Activated T-helper 1 cell treated with anti-CD3 and anti-CD28 coated beads, Interleukin-12 subunit alpha, Interleukin-12 subunit beta, Interleukin-2, Interleukin-4 antibody, amounts not matched to agents 30 ng/mL and 10 ng/mL and 1 ng/mL, durations not matched to agents 14 hours and 24 hours and 36 hours (primary cell): ENCODE measurements at regions of chr4 and their contacts with region 1.

Region 1: DNA sequence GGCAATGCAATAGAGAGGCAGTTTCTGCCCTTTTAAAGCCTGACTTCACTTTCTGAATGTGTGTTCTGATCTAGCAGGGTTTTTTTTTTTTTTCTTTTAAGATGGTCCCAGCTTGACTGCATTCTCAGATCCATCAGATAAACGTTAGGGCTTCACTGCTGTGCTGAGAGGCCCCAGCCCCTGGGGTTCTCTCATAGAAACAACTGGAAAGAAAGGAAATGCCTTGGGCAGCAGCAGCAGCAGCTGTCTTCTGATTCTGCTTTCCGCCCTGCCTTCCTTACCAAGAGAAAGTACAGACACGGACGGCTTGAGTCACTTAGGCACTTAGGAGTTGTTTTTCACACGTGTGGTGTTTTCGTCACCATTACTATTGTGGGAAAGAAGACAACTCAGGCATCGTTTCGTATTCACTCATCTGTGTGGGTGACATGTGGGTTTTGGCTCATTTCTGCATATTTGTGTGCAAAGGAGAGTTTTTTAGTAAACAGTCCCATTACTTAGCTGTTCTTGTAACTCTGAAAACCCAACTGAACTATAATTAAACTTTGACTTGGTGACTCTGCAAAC is 172.0 kb downstream of the PTTG2 start:
- DNase-seq: peak; percentile 80
- H3K4me3 Mint-ChIP-seq: peak overlapping the region; percentile 64
- H3K27ac Mint-ChIP-seq: peak overlapping the region; percentile 94
- H3K4me1 Mint-ChIP-seq: peaks cover 84% of the 10 kb centered on the region
- H3K27me3 Mint-ChIP-seq: peaks cover 3% of the 10 kb centered on the region

Region 2: GRCh38 chr4:37686373-37687193 is 445.6 kb before region 1 on chr4 and contains the start of gene RELL1:
- intact Hi-C with region 1: loop called (anchors 1 kb)
- DNase-seq: peak; percentile 99
- H3K4me3 Mint-ChIP-seq: peak within 1 kb of the TSS; percentile 96
- H3K27ac Mint-ChIP-seq: peak within 1 kb of the TSS; percentile 98
- H3K4me1 Mint-ChIP-seq: peaks cover 40% of the 10 kb centered on the region
- H3K27me3 Mint-ChIP-seq: peaks cover 7% of the 10 kb centered on the region
- total RNA-seq, gene RELL1: 21.0 and 21.4 TPM in 2 replicates

Region 3: GRCh38 chr4:38078590-38079421 is 53.4 kb before region 1 on chr4:
- intact Hi-C with region 1: loop called (anchors 5 kb)
- DNase-seq: no peak
- H3K4me3 Mint-ChIP-seq: no peak overlapping the region
- H3K27ac Mint-ChIP-seq: peak overlapping the region; percentile 77
- H3K4me1 Mint-ChIP-seq: peaks cover 30% of the 10 kb centered on the region
- H3K27me3 Mint-ChIP-seq: no peaks in the 10 kb centered on the region

Region 4: DNA sequence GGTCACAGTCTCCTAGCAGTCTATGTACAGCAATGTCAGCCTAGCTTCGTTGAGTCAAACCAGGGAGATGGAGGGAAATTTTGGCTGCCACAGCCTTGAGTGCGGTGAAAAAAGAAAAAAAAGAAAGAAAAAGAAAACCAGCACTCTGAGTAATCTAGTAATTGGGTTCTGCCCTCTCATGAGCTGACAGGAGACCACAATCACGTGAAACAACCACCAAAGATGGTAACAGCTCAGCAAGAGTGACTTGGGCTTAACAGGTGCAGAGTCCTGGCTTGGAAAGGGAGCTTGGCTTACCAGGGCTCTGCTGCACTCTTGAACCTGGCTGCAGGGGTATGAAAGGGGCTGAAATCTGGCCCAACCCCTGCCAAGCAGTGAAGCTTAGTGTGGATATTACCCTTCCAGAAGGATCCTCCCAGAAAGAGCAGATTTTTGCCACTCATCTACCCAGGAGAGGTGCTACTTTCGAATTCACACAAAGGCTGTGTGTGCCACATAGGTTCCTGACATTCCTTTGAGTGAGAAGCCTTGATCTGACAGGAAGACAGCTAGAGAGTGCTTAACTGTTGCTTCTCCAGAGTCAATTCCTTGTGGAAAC is 178.4 kb after region 1 on chr4:
- intact Hi-C with region 1: loop called (anchors 1 kb)
- DNase-seq: peak; percentile 83
- H3K4me3 Mint-ChIP-seq: peak overlapping the region; percentile 51
- H3K27ac Mint-ChIP-seq: peak overlapping the region; percentile 90
- H3K4me1 Mint-ChIP-seq: peaks cover 81% of the 10 kb centered on the region
- H3K27me3 Mint-ChIP-seq: peaks cover 15% of the 10 kb centered on the region

Region 5: GRCh38 chr4:38560768-38561558 is 428.8 kb after region 1 on chr4:
- intact Hi-C with region 1: loop called (anchors 1 kb)
- DNase-seq: peak; percentile 8
- H3K4me3 Mint-ChIP-seq: no peak overlapping the region
- H3K27ac Mint-ChIP-seq: no peak overlapping the region
- H3K4me1 Mint-ChIP-seq: peaks cover 13% of the 10 kb centered on the region
- H3K27me3 Mint-ChIP-seq: peaks cover 26% of the 10 kb centered on the region

Region 6: GRCh38 chr4:38856524-38857337 is 724.5 kb after region 1 on chr4 and contains the start of gene TLR6:
- intact Hi-C with region 1: loop called (anchors 2 kb)
- DNase-seq: peak; percentile 65
- H3K4me3 Mint-ChIP-seq: peak within 1 kb of the TSS; percentile 88
- H3K27ac Mint-ChIP-seq: peak within 1 kb of the TSS; percentile 88
- H3K4me1 Mint-ChIP-seq: peaks cover 50% of the 10 kb centered on the region
- H3K27me3 Mint-ChIP-seq: no peaks in the 10 kb centered on the region
- total RNA-seq, gene TLR6: 1.3 and 1.7 TPM in 2 replicates

Region 7: GRCh38 chr4:40056716-40057585 is 1924.8 kb after region 1 on chr4 and contains the start of gene N4BP2:
- intact Hi-C with region 1: loop called (anchors 10 kb)
- DNase-seq: peak; percentile 67
- H3K4me3 Mint-ChIP-seq: peak within 1 kb of the TSS; percentile 96
- H3K27ac Mint-ChIP-seq: peak within 1 kb of the TSS; percentile 100
- H3K4me1 Mint-ChIP-seq: peaks cover 40% of the 10 kb centered on the region
- H3K27me3 Mint-ChIP-seq: no peaks in the 10 kb centered on the region
- total RNA-seq, gene N4BP2: 28.7 and 29.0 TPM in 2 replicates